Heart left ventricle (tissue), 16 donors: ENCODE measurements at regions of chr7 and their contacts with region 1.

Region 1: GRCh38 chr7:150448789-150449147 is 1.7 kb upstream of the GIMAP8 start:
- DNase-seq: peak; percentile 83 to 90 (median 85)
- ATAC-seq: peak in 3 of 4 donors; percentile 36 to 58 (median 57)
- H3K4me3 ChIP-seq: peak overlapping the region in 3 of 12 donors; percentile 0 to 74 (median 30)
- H3K27ac ChIP-seq: peak overlapping the region; percentile 75 to 97 (median 88)
- H3K4me1 ChIP-seq: peaks cover 0 to 46% (median 15%) of the 10 kb centered on the region in 12 donors
- H3K27me3 ChIP-seq: no peaks in the 10 kb centered on the region
- CTCF ChIP-seq: peak; percentile 87 to 95 (median 90)
- POLR2A ChIP-seq: no peak

Region 2: DNA sequence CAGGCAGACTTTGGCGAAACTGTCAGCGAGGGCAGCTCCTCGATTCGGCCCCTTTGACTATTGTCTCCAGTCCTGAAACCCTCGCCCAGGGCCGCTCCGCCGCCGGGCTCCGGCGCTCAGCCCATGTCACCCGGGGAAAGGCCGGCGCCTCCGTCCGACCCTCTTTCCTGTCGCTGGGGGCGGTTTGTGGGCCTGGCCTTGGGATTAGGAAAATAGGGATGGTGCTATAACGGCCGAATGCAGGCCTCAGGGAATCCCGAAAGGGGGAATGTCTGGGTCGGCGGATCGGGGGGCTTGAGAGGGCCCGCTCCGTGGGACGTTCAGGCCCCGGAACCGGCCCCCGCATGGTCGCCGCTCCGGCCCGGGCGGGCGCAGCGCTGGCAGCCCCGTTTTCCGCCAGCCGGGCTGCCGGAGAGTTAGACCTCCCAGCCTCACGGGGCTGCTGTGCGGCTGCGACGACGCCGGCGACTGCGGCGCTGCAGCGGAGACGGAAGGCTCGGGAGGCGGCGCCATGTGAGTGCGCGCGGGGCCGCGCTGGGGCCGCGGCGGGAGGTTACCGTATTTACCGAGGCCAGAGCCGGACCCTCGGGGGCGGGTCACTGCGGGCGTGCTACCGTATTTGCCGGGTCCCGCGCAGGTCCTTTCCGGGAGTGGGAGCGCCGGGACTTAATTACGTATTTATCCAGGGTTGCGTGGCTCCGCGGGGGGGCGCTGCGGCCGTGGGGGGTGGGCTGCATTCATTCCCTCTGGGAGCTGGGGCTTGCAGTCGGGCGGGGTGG is 43.8 kb before region 1 on chr7:
- intact Hi-C with region 1: no loop called
- DNase-seq: peak; percentile 91 to 95 (median 93)
- ATAC-seq: peak; percentile 85 to 96 (median 94)
- H3K4me3 ChIP-seq: peak overlapping the region; percentile 54 to 80 (median 72)
- H3K27ac ChIP-seq: peak overlapping the region; percentile 86 to 98 (median 96)
- H3K4me1 ChIP-seq: peaks cover 0 to 34% (median 22%) of the 10 kb centered on the region in 12 donors
- H3K27me3 ChIP-seq: no peaks in the 10 kb centered on the region
- CTCF ChIP-seq: peak in 7 of 12 donors; percentile 6 to 43 (median 13)
- POLR2A ChIP-seq: peak in 1 of 2 donors; percentile 78

Region 3: DNA sequence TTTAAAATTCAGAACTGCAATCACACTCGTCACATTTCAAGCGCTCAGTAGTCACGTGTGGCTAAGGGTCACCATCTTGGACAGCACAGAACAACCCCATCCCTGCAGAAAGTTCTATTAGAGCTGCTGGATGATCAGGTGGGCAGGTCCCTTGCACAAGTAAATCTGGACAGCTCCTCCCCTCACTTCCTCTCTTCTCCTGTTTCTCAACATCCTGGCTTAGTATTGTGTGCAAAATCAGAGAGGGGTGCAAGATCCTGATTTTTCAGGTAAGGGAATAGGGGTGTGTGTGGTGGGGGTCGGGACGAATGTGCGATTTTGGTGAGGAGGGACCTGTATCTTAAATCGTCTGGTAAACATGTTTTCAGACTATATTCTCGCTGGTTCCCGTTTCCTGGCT is 118.4 kb after region 1 on chr7 and contains the start of gene GIMAP4:
- intact Hi-C with region 1: loop called in 3 of 10 experiments (anchors 2 to 5 kb)
- DNase-seq: peak in 1 of 5 donors; percentile 44
- ATAC-seq: peak; percentile 68 to 85 (median 80)
- H3K4me3 ChIP-seq: peak within 1 kb of the TSS; percentile 35 to 82 (median 60)
- H3K27ac ChIP-seq: peak within 1 kb of the TSS; percentile 74 to 93 (median 88)
- H3K4me1 ChIP-seq: peaks cover 0 to 45% (median 8%) of the 10 kb centered on the region in 12 donors
- H3K27me3 ChIP-seq: no peaks in the 10 kb centered on the region
- CTCF ChIP-seq: no peak
- POLR2A ChIP-seq: peak in 1 of 2 donors; percentile 43
- total RNA-seq, gene GIMAP4: 25.1 to 80.2 (median 35.2) TPM

Region 4: GRCh38 chr7:150737265-150738055 is 288.7 kb after region 1 on chr7 and contains the start of gene GIMAP5:
- intact Hi-C with region 1: loop called in 8 of 10 experiments (anchors 5 to 10 kb)
- DNase-seq: peak in 2 of 5 donors; percentile 43 to 55
- ATAC-seq: peak; percentile 66 to 83 (median 73)
- H3K4me3 ChIP-seq: peak within 1 kb of the TSS; percentile 43 to 78 (median 62)
- H3K27ac ChIP-seq: peak within 1 kb of the TSS; percentile 71 to 96 (median 86)
- H3K4me1 ChIP-seq: peaks cover 0 to 54% (median 15%) of the 10 kb centered on the region in 12 donors
- H3K27me3 ChIP-seq: no peaks in the 10 kb centered on the region
- CTCF ChIP-seq: no peak
- POLR2A ChIP-seq: peak in 1 of 2 donors; percentile 54
- total RNA-seq, gene GIMAP5: 6.4 to 40.4 (median 12.2) TPM

Region 5: DNA sequence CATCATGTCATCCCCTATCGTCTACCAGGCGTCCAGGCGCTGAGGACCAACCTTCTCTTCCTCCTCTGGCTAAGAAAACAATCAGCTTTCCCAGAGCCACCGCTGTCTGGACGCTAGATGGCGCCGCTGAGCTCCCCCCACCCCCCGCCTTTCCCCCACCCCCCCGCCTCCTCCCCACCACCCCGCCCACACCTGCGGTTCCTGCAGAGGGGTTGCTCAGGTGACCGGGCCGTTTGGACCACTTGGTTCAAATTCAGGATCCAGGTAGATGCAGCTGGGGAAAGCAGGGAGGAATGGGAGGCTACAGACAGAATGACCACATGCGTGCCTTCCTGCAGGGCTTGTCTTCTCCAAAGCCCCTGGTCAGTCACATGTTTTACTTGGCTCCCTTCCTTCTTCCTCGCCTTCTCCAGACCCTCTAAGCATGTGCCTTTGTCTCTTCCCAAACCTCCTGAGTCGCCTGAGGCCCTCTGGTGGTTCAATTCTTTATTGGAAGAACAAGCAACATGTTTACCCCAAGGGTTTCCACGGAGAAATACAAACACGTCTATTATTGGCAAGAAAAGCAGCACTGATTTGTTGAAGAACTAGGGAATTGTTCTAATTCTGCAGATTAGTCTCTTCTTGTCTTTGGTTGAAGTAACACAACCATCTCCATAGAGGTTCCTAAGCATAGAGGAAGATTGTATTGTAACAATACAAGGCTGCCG is 428.2 kb after region 1 on chr7:
- intact Hi-C with region 1: loop called in 1 of 10 experiments (anchors 10 kb)
- DNase-seq: peak in 4 of 5 donors; percentile 51 to 66 (median 61)
- ATAC-seq: peak; percentile 71 to 94 (median 90)
- H3K4me3 ChIP-seq: no peak overlapping the region
- H3K27ac ChIP-seq: no peak overlapping the region
- H3K4me1 ChIP-seq: peaks cover 0 to 16% (median 2%) of the 10 kb centered on the region in 12 donors
- H3K27me3 ChIP-seq: no peaks in the 10 kb centered on the region
- CTCF ChIP-seq: peak; percentile 40 to 65 (median 56)
- POLR2A ChIP-seq: no peak